IMR-90 (cell line): ENCODE measurements at regions of chr22 and their contacts with region 1.

Region 1: GRCh38 chr22:41940832-41941765 is 5.9 kb downstream of the CENPM start:
- DNase-seq: peak; percentile 91
- ATAC-seq: peak; percentile 95
- H3K4me3 ChIP-seq: no peak overlapping the region
- H3K27ac ChIP-seq: no peak overlapping the region
- H3K4me1 ChIP-seq: peaks cover 14% of the 10 kb centered on the region
- H3K27me3 ChIP-seq: no peaks in the 10 kb centered on the region
- CTCF ChIP-seq: peak; percentile 96
- POLR2A ChIP-seq: peak; percentile 65; the same call in 1 of the 2 replicates
- RAD21 ChIP-seq: peak; percentile 98

Region 2: GRCh38 chr22:41666661-41667258 is 274.3 kb before region 1 on chr22:
- CTCF ChIA-PET with region 1: interaction called, 5 read pairs
- POLR2A ChIA-PET with region 1: no interaction called
- dilution Hi-C with region 1: no loop called
- in situ Hi-C with region 1: no loop called
- intact Hi-C with region 1: loop called (anchors 1 kb)
- DNase-seq: peak; percentile 84
- ATAC-seq: peak; percentile 70
- H3K4me3 ChIP-seq: no peak overlapping the region; the same call in 1 of the 2 replicates
- H3K27ac ChIP-seq: peak overlapping the region; percentile 93
- H3K4me1 ChIP-seq: peaks cover 18% of the 10 kb centered on the region
- H3K27me3 ChIP-seq: no peaks in the 10 kb centered on the region
- CTCF ChIP-seq: peak; percentile 100
- POLR2A ChIP-seq: 0 out of 2 replicates have a peak, but pooled peaks have one; percentile 26
- RAD21 ChIP-seq: peak; percentile 75

Region 3: DNA sequence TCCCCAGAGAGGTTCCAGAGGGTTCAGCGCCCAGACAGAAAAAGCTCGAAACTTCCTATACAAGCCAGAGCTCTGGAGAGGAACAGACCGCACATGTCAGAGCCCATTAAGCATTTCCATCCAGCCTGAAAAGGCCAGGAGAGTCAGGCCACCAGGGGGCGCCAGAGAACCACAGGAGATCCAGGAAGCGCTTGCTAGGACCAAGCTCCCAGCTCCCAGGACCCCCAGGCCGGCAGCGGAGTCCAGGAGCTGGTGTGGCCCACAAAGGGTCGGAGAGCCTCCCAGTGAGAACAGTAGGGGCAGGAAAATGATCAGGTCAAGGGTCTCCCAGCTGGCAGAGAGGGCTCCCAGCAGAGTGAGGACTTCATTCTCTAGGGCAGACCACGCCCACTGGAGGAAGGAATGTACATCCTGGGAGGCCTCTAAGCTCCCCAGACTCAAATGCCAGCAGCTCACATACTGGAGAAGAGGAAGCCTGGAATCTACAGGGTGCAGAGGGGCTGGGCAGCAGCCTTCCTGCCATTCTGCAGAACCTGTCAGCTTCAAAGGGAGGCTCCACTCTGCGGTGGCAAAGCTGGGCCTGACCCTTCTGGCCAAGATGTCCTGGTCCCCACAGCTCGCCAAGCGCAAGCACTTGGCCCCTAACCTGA is 243.8 kb before region 1 on chr22:
- CTCF ChIA-PET with region 1: interaction called, 26 read pairs
- POLR2A ChIA-PET with region 1: no interaction called
- dilution Hi-C with region 1: no loop called
- in situ Hi-C with region 1: loop called (anchors 5 kb)
- intact Hi-C with region 1: loop called (anchors 1 kb)
- DNase-seq: peak; percentile 80
- ATAC-seq: peak; percentile 92
- H3K4me3 ChIP-seq: no peak overlapping the region
- H3K27ac ChIP-seq: peak overlapping the region; percentile 37
- H3K4me1 ChIP-seq: peaks cover 6% of the 10 kb centered on the region
- H3K27me3 ChIP-seq: no peaks in the 10 kb centered on the region; the same call in 1 of the 2 replicates
- CTCF ChIP-seq: peak; percentile 88
- POLR2A ChIP-seq: no peak
- RAD21 ChIP-seq: peak; percentile 84

Region 4: GRCh38 chr22:41746567-41747400 is 194.3 kb before region 1 on chr22:
- CTCF ChIA-PET with region 1: interaction called, 16 read pairs
- POLR2A ChIA-PET with region 1: no interaction called
- dilution Hi-C with region 1: no loop called
- in situ Hi-C with region 1: no loop called
- intact Hi-C with region 1: loop called (anchors 1 kb)
- DNase-seq: peak; percentile 76
- ATAC-seq: peak; percentile 99
- H3K4me3 ChIP-seq: no peak overlapping the region
- H3K27ac ChIP-seq: no peak overlapping the region
- H3K4me1 ChIP-seq: no peaks in the 10 kb centered on the region; the same call in 1 of the 2 replicates
- H3K27me3 ChIP-seq: peaks cover 31% of the 10 kb centered on the region
- CTCF ChIP-seq: peak; percentile 85
- POLR2A ChIP-seq: no peak
- RAD21 ChIP-seq: peak; percentile 86

Region 5: GRCh38 chr22:41822317-41823060 is 118.6 kb before region 1 on chr22:
- CTCF ChIA-PET with region 1: no interaction called
- POLR2A ChIA-PET with region 1: no interaction called
- dilution Hi-C with region 1: no loop called
- in situ Hi-C with region 1: no loop called
- intact Hi-C with region 1: loop called (anchors 1 kb)
- DNase-seq: peak; percentile 82
- ATAC-seq: peak; percentile 59; the same call in 1 of the 2 replicates
- H3K4me3 ChIP-seq: no peak overlapping the region
- H3K27ac ChIP-seq: no peak overlapping the region
- H3K4me1 ChIP-seq: peaks cover 20% of the 10 kb centered on the region
- H3K27me3 ChIP-seq: no peaks in the 10 kb centered on the region
- CTCF ChIP-seq: peak; percentile 64
- POLR2A ChIP-seq: no peak
- RAD21 ChIP-seq: peak; percentile 50

Region 6: GRCh38 chr22:41902932-41903421 is 38.1 kb before region 1 on chr22:
- CTCF ChIA-PET with region 1: no interaction called
- POLR2A ChIA-PET with region 1: no interaction called
- dilution Hi-C with region 1: no loop called
- in situ Hi-C with region 1: no loop called
- intact Hi-C with region 1: no loop called
- DNase-seq: no peak
- ATAC-seq: no peak
- H3K4me3 ChIP-seq: no peak overlapping the region
- H3K27ac ChIP-seq: no peak overlapping the region
- H3K4me1 ChIP-seq: no peaks in the 10 kb centered on the region
- H3K27me3 ChIP-seq: no peaks in the 10 kb centered on the region
- CTCF ChIP-seq: no peak
- POLR2A ChIP-seq: no peak
- RAD21 ChIP-seq: no peak

Region 7: GRCh38 chr22:42528258-42528948 is 587.3 kb after region 1 on chr22:
- CTCF ChIA-PET with region 1: no interaction called
- POLR2A ChIA-PET with region 1: no interaction called
- dilution Hi-C with region 1: no loop called
- in situ Hi-C with region 1: no loop called
- intact Hi-C with region 1: no loop called
- DNase-seq: no peak
- ATAC-seq: no peak
- H3K4me3 ChIP-seq: no peak overlapping the region
- H3K27ac ChIP-seq: no peak overlapping the region
- H3K4me1 ChIP-seq: no peaks in the 10 kb centered on the region
- H3K27me3 ChIP-seq: peaks cover 8% of the 10 kb centered on the region
- CTCF ChIP-seq: no peak
- POLR2A ChIP-seq: no peak
- RAD21 ChIP-seq: no peak